B cell (primary cell): ENCODE measurements at regions of chr3 and their contacts with region 1.

Region 1: GRCh38 chr3:167882067-167882667 is 146.6 kb downstream of the SERPINI1 start:
- DNase-seq: peak; percentile 68
- ATAC-seq: peak; percentile 47
- H3K4me3 ChIP-seq: no peak overlapping the region
- H3K4me3 Mint-ChIP-seq: peak overlapping the region; percentile 44
- H3K27ac ChIP-seq: no peak overlapping the region
- H3K27ac Mint-ChIP-seq: no peak overlapping the region
- H3K4me1 ChIP-seq: peaks cover 0 to 5% of the 10 kb centered on the region in 2 donors
- H3K4me1 Mint-ChIP-seq: peaks cover 4% of the 10 kb centered on the region
- H3K27me3 ChIP-seq: no peaks in the 10 kb centered on the region
- H3K27me3 Mint-ChIP-seq: peaks cover 11% of the 10 kb centered on the region
- CTCF ChIP-seq: peak; percentile 90

Region 2: DNA sequence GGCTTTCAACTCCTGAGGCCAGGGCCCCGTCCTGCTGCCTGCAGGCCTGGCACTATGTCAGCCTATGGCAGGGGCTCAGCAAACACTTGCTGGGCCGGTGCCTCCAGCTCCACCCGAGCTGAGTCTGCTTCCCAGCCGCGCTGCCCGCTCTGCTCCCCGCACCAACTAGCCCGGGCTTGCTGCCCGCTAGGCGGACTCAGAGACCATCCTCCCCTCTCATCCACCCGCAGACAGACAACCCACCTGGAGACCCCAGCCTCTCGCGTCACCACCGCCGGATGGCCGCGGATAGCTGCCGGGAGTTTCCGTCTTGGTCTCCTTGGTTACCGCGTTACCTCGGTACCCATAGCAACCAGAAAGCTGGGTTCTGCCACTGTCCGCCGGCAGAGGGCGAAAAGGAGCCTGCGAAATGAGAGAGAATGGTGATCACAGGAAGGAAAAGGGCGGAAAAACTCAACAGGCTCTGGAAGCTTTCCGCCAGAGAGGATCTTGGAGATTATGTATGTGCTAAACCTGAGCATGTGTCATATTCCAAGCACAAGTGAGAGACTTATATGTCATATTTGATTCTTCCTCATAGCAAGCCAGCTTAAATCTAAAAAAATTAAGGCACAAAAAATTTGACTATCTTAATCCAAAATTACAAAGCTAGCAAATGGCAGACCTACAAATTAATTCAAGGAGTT is 502.0 kb before region 1 on chr3 and contains the start of gene ZBBX:
- CTCF ChIA-PET with region 1: interaction called, 82 read pairs
- POLR2A ChIA-PET with region 1: no interaction called
- intact Hi-C with region 1: loop called (anchors 1 kb)
- DNase-seq: peak; percentile 92
- ATAC-seq: peak; percentile 95
- H3K4me3 ChIP-seq: peak within 1 kb of the TSS in 4 of 5 experiments; percentile 33 to 56 (median 48)
- H3K4me3 Mint-ChIP-seq: peak within 1 kb of the TSS; percentile 89
- H3K27ac ChIP-seq: peak within 1 kb of the TSS; percentile 13 to 45
- H3K27ac Mint-ChIP-seq: peak within 1 kb of the TSS; percentile 69
- H3K4me1 ChIP-seq: peaks cover 7 to 8% of the 10 kb centered on the region in 2 donors
- H3K4me1 Mint-ChIP-seq: peaks cover 8% of the 10 kb centered on the region
- H3K27me3 ChIP-seq: peaks cover 0 to 3% (median 0%) of the 10 kb centered on the region in 4 experiments
- H3K27me3 Mint-ChIP-seq: peaks cover 5% of the 10 kb centered on the region
- CTCF ChIP-seq: peak; percentile 91
- total RNA-seq, gene ZBBX: not detected in 2 replicates

Region 3: DNA sequence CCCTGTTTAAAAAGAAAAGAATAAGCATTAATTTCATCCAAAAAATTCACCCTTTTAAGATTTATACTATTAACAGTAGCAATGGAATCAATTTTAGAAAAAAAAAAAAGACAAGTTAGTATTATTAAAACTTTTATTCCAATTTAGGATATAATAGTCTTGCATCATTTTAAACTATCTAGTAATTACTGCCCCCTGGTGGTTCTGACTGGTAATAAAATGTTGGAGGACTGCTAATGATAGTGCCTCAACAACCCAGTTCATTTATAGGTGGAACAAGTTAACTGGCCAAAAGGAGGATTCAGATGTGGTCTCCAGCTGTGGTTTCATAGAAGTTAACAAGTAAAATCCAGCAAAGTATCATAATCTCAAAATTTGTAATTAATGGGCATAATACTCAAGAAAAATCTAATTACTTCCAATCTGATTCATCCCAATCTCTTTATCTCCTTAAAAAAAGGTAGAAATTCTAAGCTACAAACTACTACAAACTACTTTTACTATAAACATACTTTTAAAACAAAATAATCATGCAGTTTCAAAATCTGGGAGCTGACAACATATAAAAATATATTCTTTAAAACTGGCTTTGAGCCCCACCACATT is 197.7 kb before region 1 on chr3:
- CTCF ChIA-PET with region 1: interaction called, 25 read pairs
- POLR2A ChIA-PET with region 1: no interaction called
- intact Hi-C with region 1: loop called (anchors 1 kb)
- DNase-seq: peak; percentile 75
- ATAC-seq: peak; percentile 71
- H3K4me3 ChIP-seq: no peak overlapping the region
- H3K4me3 Mint-ChIP-seq: no peak overlapping the region
- H3K27ac ChIP-seq: peak overlapping the region in 1 of 2 donors; percentile 44
- H3K27ac Mint-ChIP-seq: no peak overlapping the region
- H3K4me1 ChIP-seq: no peaks in the 10 kb centered on the region
- H3K4me1 Mint-ChIP-seq: no peaks in the 10 kb centered on the region
- H3K27me3 ChIP-seq: no peaks in the 10 kb centered on the region
- H3K27me3 Mint-ChIP-seq: no peaks in the 10 kb centered on the region
- CTCF ChIP-seq: peak; percentile 90

Region 4: GRCh38 chr3:167691366-167691765 is 190.8 kb before region 1 on chr3:
- CTCF ChIA-PET with region 1: interaction called, 10 read pairs
- POLR2A ChIA-PET with region 1: no interaction called
- intact Hi-C with region 1: no loop called
- DNase-seq: peak; percentile 60
- ATAC-seq: peak; percentile 96
- H3K4me3 ChIP-seq: no peak overlapping the region
- H3K4me3 Mint-ChIP-seq: peak overlapping the region; percentile 2
- H3K27ac ChIP-seq: peak overlapping the region in 1 of 2 donors; percentile 31
- H3K27ac Mint-ChIP-seq: peak overlapping the region; percentile 39
- H3K4me1 ChIP-seq: peaks cover 9 to 14% of the 10 kb centered on the region in 2 donors
- H3K4me1 Mint-ChIP-seq: peaks cover 14% of the 10 kb centered on the region
- H3K27me3 ChIP-seq: no peaks in the 10 kb centered on the region
- H3K27me3 Mint-ChIP-seq: no peaks in the 10 kb centered on the region
- CTCF ChIP-seq: no peak

Region 5: DNA sequence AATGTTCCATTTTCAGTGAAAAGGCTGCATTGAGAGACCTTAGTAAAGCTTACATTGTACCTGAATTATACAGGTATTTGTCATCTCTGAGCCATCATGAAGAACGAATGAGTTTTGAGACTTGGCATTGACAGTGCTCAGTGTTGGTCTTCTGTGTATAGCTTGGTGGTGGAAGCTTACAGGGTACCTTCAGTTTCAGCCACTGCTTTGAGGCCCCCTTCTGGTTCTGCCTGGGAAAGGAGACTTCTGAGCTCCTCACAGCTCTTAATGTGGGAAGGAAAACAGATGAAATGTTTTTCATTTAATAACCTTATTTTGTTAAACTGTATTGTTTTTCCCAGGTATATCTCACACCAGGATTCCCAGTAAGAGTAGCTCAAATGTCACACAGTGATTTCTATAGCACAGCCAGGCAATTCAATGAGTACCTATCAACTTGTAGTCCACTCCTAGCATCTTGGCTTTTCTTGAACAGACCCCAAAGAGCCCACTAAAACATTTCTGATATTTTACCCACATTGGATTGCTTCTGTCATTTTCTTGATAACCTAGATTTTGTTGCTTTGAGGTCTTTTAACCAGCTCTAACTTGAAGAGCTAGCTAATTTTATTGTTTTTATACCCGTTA is 141.1 kb before region 1 on chr3:
- CTCF ChIA-PET with region 1: interaction called, 17 read pairs
- POLR2A ChIA-PET with region 1: no interaction called
- intact Hi-C with region 1: no loop called
- DNase-seq: peak; percentile 60
- ATAC-seq: peak; percentile 90
- H3K4me3 ChIP-seq: no peak overlapping the region
- H3K4me3 Mint-ChIP-seq: no peak overlapping the region
- H3K27ac ChIP-seq: no peak overlapping the region
- H3K27ac Mint-ChIP-seq: no peak overlapping the region
- H3K4me1 ChIP-seq: peaks cover 4 to 13% of the 10 kb centered on the region in 2 donors
- H3K4me1 Mint-ChIP-seq: peaks cover 20% of the 10 kb centered on the region
- H3K27me3 ChIP-seq: no peaks in the 10 kb centered on the region
- H3K27me3 Mint-ChIP-seq: no peaks in the 10 kb centered on the region
- CTCF ChIP-seq: peak; percentile 62

Region 6: GRCh38 chr3:167837466-167837865 is 44.7 kb before region 1 on chr3:
- CTCF ChIA-PET with region 1: interaction called, 27 read pairs
- POLR2A ChIA-PET with region 1: no interaction called
- intact Hi-C with region 1: loop called (anchors 1 kb)
- DNase-seq: peak; percentile 24
- ATAC-seq: no peak
- H3K4me3 ChIP-seq: no peak overlapping the region
- H3K4me3 Mint-ChIP-seq: no peak overlapping the region
- H3K27ac ChIP-seq: no peak overlapping the region
- H3K27ac Mint-ChIP-seq: no peak overlapping the region
- H3K4me1 ChIP-seq: peaks cover 0 to 5% of the 10 kb centered on the region in 2 donors
- H3K4me1 Mint-ChIP-seq: peaks cover 5% of the 10 kb centered on the region
- H3K27me3 ChIP-seq: no peaks in the 10 kb centered on the region
- H3K27me3 Mint-ChIP-seq: no peaks in the 10 kb centered on the region
- CTCF ChIP-seq: no peak

Region 7: DNA sequence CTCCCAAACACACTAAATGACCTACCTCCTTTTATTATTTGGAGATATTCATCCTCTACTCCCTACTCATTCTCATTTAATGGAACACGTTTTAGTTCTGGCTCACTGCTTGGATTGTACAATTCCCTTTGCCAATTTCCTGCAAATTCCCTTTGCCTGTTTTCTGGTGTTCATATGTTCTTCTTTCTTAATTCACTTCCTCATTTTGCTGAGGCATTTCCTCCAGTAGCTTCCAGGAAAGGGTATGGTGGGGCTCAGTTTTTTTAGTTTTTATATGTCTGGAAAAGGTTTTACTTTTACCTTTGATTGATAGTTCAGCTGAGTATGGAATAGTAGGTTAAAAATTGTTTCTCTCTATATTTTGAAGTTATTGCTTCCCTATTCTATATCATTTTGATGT is 357.1 kb after region 1 on chr3:
- CTCF ChIA-PET with region 1: no interaction called
- POLR2A ChIA-PET with region 1: no interaction called
- intact Hi-C with region 1: no loop called
- DNase-seq: no peak
- ATAC-seq: no peak
- H3K4me3 ChIP-seq: no peak overlapping the region
- H3K4me3 Mint-ChIP-seq: no peak overlapping the region
- H3K27ac ChIP-seq: no peak overlapping the region
- H3K27ac Mint-ChIP-seq: no peak overlapping the region
- H3K4me1 ChIP-seq: no peaks in the 10 kb centered on the region
- H3K4me1 Mint-ChIP-seq: no peaks in the 10 kb centered on the region
- H3K27me3 ChIP-seq: no peaks in the 10 kb centered on the region
- H3K27me3 Mint-ChIP-seq: peaks cover 4% of the 10 kb centered on the region
- CTCF ChIP-seq: no peak